ENCODE measurements at regions of chr7 and their contacts with region 1.

Region 1: DNA sequence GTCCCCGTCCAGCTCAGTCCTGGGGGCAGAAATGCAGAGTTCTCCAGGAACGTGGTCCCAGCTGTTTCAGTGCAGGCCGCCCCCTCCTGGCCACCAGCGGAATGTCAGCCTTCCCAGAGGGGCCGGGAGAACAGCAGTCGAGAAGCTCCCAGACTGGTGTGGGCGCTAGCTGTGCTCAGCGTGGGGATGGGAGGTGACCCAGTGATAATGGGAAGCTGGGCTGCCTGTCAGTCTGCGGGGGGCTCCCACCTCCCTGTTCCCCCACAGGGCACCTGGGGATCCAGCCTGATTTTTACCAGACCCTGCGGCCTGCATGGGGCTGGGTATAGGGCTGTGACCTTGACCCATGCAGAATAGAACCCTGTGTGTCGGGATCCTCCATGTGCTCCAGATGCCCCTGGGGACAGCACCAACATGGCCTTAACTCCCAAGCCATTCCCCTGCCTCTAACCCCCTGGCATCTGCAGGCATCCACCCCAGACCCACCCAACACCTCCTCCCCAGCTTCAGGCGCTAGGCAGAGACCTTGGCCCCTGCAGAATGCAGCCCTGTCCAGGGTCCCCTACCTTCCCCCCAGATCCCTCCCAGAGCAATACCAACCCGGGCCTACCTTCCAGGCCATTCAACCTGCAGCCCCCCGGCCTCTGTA is 946 bp upstream of the ELN start:
- H3K4me3 ChIP-seq: no peak overlapping the region
- H3K27ac ChIP-seq: no peak overlapping the region
- H3K4me1 ChIP-seq: no peaks in the 10 kb centered on the region
- CTCF ChIP-seq: peak; percentile 61; the same call in 1 of the 2 replicates

Region 2: DNA sequence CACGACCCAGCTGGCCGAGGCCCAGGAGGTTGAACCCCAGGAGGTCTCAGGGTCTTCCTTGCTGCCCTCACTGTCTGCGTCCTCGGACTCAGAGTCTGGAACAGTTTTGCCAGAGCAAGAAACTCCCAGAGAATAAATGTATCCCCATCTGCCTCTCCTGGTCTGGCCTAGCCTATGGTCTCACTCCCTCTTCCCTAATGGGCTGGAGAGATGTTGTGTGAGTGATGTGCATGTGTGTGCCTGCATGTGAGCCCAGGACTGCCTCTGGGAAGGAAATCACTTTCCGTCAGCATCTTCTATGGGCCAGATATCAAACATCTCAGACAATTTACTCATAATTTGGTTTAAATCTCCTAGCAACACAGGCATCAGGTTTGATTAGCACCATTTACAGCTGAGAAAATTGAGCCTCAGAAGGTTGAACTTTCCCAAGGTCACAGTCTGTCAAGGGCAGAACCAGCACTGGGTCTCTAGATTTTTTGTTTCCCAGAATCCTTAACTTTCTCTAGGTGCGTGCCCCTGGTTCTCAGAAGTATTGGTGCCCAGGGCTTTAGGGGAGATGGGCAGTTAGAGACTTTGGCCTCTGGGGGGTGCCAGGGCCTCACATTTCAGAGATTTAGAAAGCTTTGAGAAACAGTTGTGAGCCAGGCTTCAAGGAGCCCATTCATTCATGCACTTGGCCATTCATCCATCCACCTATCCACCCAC is 161.1 kb before region 1 on chr7:
- CTCF ChIA-PET with region 1: interaction called, 24 read pairs
- POLR2A ChIA-PET with region 1: no interaction called
- H3K4me3 ChIP-seq: no peak overlapping the region
- H3K27ac ChIP-seq: no peak overlapping the region
- H3K4me1 ChIP-seq: no peaks in the 10 kb centered on the region
- CTCF ChIP-seq: 0 out of 2 replicates have a peak, but pooled peaks have one; percentile 28

Region 3: DNA sequence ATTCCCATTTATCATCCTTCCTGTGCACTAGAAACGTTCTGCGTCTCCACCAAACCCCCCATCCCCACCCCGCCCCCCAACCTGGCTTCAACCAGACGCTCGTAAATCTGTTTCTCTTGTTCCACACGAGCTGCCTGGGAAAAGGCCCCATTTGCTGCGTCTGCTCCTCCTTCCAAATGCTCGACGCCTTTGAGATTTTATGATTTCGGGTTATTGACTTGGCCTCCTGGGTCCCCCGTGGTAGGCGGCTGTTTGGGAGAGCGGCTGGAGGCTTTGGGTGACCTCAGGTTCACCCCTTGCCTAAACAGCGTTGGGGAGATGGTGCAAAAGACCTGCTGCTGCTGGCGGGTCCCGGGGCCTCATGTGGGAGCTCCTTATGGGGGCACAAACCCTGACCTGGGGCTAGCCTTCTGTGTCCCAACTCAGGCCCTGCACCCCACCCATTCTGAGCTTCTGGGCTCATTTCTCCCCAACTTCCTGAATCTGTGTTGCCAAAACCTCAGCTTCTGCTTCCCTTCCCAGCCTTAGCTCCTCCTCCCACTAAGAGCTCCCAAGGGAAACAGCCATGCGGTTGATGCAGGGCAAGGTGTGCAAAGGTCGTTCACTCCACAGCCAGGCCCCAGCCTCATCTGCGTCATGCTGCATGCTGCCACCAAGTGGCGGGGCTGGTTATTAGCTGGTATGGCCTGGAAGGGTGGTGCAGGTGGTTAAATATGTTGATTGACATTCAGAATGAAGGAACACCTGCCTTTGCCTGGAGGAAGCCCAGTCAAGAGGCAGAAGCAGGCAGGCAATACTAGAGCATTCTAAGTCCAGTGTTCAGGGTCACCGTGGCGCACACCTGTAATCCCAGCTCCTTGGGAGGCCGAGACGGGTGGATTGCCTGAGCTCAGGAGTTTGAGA is 48.1 kb before region 1 on chr7:
- CTCF ChIA-PET with region 1: interaction called, 11 read pairs
- POLR2A ChIA-PET with region 1: no interaction called
- H3K4me3 ChIP-seq: no peak overlapping the region
- H3K27ac ChIP-seq: no peak overlapping the region
- H3K4me1 ChIP-seq: peaks cover 3% of the 10 kb centered on the region; the same call in 1 of the 2 replicates
- CTCF ChIP-seq: no peak

Region 4: DNA sequence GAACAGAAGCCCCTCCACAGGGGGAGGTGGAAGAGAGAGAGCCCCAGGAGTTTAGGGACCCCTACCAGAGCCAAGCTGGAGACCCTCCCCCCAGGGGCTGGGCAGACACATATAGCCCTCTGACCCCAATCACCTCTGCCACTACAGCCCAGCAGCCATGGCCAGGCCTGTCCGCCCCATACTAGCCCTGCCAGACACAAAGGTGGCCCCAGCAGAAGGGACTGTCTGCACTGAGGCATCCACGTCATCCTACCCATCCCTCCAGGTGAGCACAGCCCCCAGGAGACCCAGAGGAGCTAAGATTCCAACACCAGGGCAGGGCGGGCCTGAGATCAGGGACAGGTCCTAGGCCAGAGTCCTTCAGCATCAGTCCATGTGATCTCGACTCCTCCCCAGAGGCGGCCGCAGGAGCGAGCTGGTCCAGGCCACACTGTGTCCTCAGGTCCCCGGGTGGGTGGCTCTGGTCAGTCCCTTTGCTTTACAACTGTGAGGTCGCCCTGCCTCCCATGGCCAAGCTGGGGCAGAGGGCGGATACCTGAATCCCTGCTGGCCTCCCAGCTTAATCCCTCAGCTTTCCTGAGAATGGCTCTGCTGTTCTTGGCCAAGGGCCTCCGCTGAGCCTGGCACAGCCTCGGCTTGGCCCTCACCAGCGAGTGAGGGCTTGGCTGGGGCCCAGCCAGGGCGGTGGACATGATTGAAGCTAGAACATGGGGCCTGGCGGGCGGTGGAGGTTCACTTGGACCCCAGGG is 13.3 kb before region 1 on chr7:
- CTCF ChIA-PET with region 1: interaction called, 14 read pairs
- POLR2A ChIA-PET with region 1: no interaction called
- H3K4me3 ChIP-seq: no peak overlapping the region
- H3K27ac ChIP-seq: no peak overlapping the region
- H3K4me1 ChIP-seq: no peaks in the 10 kb centered on the region
- CTCF ChIP-seq: no peak

Region 5: GRCh38 chr7:74043523-74043951 is 16.5 kb after region 1 on chr7:
- CTCF ChIA-PET with region 1: interaction called, 16 read pairs
- POLR2A ChIA-PET with region 1: no interaction called
- H3K4me3 ChIP-seq: no peak overlapping the region
- H3K27ac ChIP-seq: no peak overlapping the region
- H3K4me1 ChIP-seq: no peaks in the 10 kb centered on the region
- CTCF ChIP-seq: no peak

Measured in HEK293 (cell line).